Transverse colon (tissue), 4 donors: ENCODE measurements at regions of chr2 and their contacts with region 1.

Region 1: GRCh38 chr2:168961450-168962229 is 60.5 kb downstream of the G6PC2 start:
- DNase-seq: peak; percentile 14
- H3K4me3 ChIP-seq: no peak overlapping the region
- H3K27ac ChIP-seq: no peak overlapping the region
- H3K4me1 ChIP-seq: peaks cover 0 to 6% (median 2%) of the 10 kb centered on the region in 4 donors
- H3K27me3 ChIP-seq: no peaks in the 10 kb centered on the region
- CTCF ChIP-seq: peak; percentile 81 to 92 (median 82)
- EP300 ChIP-seq: no peak
- POLR2A ChIP-seq: no peak

Region 2: DNA sequence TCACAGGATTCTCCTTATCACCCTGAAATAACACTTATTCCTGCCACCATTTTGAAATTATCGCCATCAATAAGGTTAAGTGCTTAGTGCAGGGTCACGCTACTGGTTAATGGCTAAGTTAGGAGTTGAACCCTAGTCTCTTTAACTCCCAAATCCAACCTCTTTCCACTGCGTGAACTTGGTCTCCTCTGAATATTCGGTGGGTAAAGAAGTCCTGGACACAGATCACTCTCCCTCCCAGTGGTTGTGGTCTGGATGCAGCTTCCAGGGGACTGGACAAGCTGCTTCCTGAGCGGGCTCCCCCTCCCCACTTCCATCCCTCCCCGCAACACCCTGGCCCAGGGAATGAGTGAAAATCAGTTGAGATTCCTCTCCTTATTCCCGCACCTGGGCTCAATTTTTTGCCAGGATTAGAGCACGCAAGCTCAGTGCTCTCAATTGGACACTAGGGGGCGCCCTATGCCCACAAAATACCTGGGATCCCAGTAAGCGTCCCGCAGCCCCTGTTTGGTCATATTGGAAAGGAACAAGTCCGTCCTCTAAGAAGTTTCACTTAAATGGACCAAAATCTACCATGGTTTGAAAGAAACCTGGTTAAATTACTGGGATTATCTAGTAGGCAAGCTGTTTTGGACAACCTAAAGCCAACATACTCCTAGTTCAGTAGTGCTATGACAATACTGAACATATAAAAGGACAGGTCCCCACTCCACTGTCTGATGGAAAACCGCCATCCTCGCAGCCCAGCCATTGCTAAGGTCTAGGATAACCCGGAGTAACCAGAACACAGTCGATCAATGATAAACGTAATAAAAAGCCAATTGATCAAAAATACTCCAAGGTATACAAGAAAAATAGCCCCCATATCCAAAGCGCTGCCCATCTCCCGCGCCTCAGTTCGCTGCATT is 148.1 kb after region 1 on chr2:
- in situ Hi-C with region 1: loop called in 1 of 4 experiments (anchors 10 kb)
- intact Hi-C with region 1: loop called (anchors 10 kb)
- DNase-seq: peak; percentile 85
- H3K4me3 ChIP-seq: no peak overlapping the region
- H3K27ac ChIP-seq: no peak overlapping the region
- H3K4me1 ChIP-seq: peaks cover 0 to 6% (median 0%) of the 10 kb centered on the region in 4 donors
- H3K27me3 ChIP-seq: peaks cover 4% of the 10 kb centered on the region
- CTCF ChIP-seq: peak; percentile 81 to 93 (median 87)
- EP300 ChIP-seq: no peak
- POLR2A ChIP-seq: no peak

Region 3: DNA sequence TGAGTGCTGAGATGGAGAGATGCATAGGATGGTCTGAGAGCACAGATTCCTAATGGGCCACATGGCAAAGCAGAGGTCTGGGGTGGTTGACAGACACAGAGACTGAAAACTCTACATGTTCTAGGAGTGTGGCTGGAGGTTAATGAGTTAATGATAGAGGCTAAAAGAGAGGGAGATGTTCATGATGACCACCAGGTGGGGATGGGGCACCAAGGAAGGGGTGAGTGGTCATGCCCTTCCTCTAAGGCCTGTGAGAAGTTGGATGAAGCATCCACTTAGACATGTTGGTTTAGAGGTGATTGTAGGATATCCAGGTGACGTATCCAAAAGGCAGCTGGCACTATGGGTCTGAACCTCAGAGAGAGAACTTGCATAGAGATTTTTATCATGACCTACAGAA is 298.6 kb after region 1 on chr2:
- in situ Hi-C with region 1: no loop called
- intact Hi-C with region 1: no loop called
- DNase-seq: no peak
- H3K4me3 ChIP-seq: no peak overlapping the region
- H3K27ac ChIP-seq: no peak overlapping the region
- H3K4me1 ChIP-seq: no peaks in the 10 kb centered on the region
- H3K27me3 ChIP-seq: no peaks in the 10 kb centered on the region
- CTCF ChIP-seq: no peak
- EP300 ChIP-seq: no peak
- POLR2A ChIP-seq: no peak

Region 4: DNA sequence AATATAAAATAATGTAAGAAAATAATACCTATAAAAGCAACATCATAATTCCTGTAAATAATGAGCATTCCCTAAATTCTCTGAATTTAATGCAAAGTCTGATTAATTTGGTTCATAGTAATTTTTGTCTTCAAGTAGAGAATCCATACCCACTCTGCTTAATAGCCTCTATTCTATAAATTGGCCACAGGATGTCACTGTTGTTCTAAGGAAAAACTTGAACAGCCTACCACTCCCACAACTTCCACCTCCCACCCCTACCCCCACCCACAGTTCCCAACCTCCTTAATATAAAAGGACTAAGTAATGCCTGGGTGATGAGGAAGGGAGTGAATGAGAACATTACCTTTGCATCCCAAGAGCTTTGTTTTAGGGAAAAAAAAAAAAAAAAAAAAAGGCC is 490.4 kb after region 1 on chr2:
- in situ Hi-C with region 1: loop called in 1 of 4 experiments (anchors 25 kb)
- intact Hi-C with region 1: no loop called
- DNase-seq: no peak
- H3K4me3 ChIP-seq: no peak overlapping the region
- H3K27ac ChIP-seq: no peak overlapping the region
- H3K4me1 ChIP-seq: no peaks in the 10 kb centered on the region
- H3K27me3 ChIP-seq: peaks cover 3% of the 10 kb centered on the region
- CTCF ChIP-seq: peak in 3 of 5 experiments; percentile 15 to 33 (median 24)
- EP300 ChIP-seq: no peak
- POLR2A ChIP-seq: no peak